Ovary (tissue), 10 donors: ENCODE measurements at regions of chr1 and their contacts with region 1.

Region 1: GRCh38 chr1:29550119-29550898 is 314.0 kb downstream of the PTPRU start:
- DNase-seq: no peak
- H3K4me3 ChIP-seq: no peak overlapping the region
- H3K27ac ChIP-seq: no peak overlapping the region
- H3K4me1 ChIP-seq: no peaks in the 10 kb centered on the region
- H3K27me3 ChIP-seq: no peaks in the 10 kb centered on the region
- CTCF ChIP-seq: no peak
- EP300 ChIP-seq: no peak
- POLR2A ChIP-seq: no peak

Region 2: DNA sequence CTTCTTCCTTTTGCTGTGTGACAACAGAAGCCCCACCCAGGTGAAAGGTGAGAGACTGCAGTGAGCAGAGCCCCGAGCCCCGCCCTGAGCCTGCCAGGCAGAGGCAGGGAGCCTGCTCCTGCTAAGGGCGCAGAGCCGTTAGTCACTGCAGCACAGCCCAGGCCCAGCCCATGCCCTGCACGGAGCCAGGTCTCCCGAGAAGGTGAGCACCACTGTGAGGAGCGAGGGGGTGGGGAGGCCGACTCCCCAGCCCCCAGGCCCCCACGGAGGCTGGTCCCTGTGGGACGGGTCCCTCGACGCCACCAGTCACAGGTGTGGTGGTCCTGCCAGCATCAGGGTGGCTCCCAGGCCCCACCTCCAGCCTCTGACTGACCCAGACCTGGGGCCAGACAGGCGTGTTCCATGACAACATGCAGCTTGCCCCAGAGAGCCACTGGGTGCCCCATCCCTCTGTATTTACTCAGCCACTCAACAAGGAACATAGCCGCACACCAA is 1107.5 kb after region 1 on chr1:
- intact Hi-C with region 1: loop called in 2 of 4 experiments (anchors 2 to 5 kb)
- DNase-seq: peak in 1 of 5 donors; percentile 18
- H3K4me3 ChIP-seq: no peak overlapping the region
- H3K27ac ChIP-seq: no peak overlapping the region
- H3K4me1 ChIP-seq: no peaks in the 10 kb centered on the region
- H3K27me3 ChIP-seq: no peaks in the 10 kb centered on the region
- CTCF ChIP-seq: no peak
- EP300 ChIP-seq: no peak
- POLR2A ChIP-seq: no peak